Endothelial cell of umbilical vein (primary cell): ENCODE measurements at regions of chr5 and their contacts with region 1.

Region 1: GRCh38 chr5:34486160-34486848 is 169.8 kb upstream of the RAI14 start:
- DNase-seq: peak; percentile 87
- H3K4me3 ChIP-seq: no peak overlapping the region
- H3K27ac ChIP-seq: peak overlapping the region; percentile 78
- H3K4me1 ChIP-seq: peaks cover 19% of the 10 kb centered on the region
- H3K27me3 ChIP-seq: peaks cover 0 to 7% of the 10 kb centered on the region in 2 experiments
- CTCF ChIP-seq: peak; percentile 68 to 78
- POLR2A ChIP-seq: no peak

Region 2: DNA sequence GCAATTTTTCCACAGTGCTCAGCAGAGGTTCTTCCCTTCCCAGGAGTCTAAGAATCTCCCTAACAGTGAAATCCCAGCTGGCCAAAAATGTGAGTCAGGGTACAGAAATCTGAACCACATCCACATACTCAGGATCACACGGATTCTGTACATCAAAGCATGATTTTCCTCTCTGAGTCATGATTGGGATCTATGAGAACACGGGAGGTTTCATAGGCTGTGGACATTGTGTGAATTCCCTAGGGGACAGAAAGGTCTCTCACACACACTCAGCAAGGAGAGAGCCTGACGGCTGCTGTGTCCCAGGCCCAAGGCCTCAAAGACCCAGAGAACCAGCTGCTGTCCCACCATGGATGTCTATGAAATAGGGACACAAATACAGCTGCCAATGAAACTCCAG is 697.4 kb before region 1 on chr5:
- CTCF ChIA-PET with region 1: no interaction called
- POLR2A ChIA-PET with region 1: no interaction called
- dilution Hi-C with region 1: no loop called
- intact Hi-C with region 1: no loop called
- DNase-seq: no peak
- H3K4me3 ChIP-seq: no peak overlapping the region
- H3K27ac ChIP-seq: no peak overlapping the region
- H3K4me1 ChIP-seq: no peaks in the 10 kb centered on the region
- H3K27me3 ChIP-seq: no peaks in the 10 kb centered on the region
- CTCF ChIP-seq: no peak
- POLR2A ChIP-seq: no peak

Region 3: GRCh38 chr5:34522599-34523386 is 36.5 kb after region 1 on chr5:
- CTCF ChIA-PET with region 1: interaction called, 13 read pairs
- POLR2A ChIA-PET with region 1: no interaction called
- dilution Hi-C with region 1: no loop called
- intact Hi-C with region 1: loop called (anchors 1 kb)
- DNase-seq: no peak
- H3K4me3 ChIP-seq: no peak overlapping the region
- H3K27ac ChIP-seq: peak overlapping the region; percentile 84
- H3K4me1 ChIP-seq: peaks cover 42% of the 10 kb centered on the region
- H3K27me3 ChIP-seq: no peaks in the 10 kb centered on the region
- CTCF ChIP-seq: peak; percentile 65
- POLR2A ChIP-seq: no peak

Region 4: GRCh38 chr5:34656001-34656699 is 169.8 kb after region 1 on chr5 and contains the start of gene RAI14:
- CTCF ChIA-PET with region 1: interaction called, 18 read pairs
- POLR2A ChIA-PET with region 1: interaction called, 3 read pairs
- dilution Hi-C with region 1: no loop called
- intact Hi-C with region 1: loop called (anchors 1 kb)
- DNase-seq: peak; percentile 93
- H3K4me3 ChIP-seq: peak within 1 kb of the TSS; percentile 96 to 99 (median 98)
- H3K27ac ChIP-seq: peak within 1 kb of the TSS; percentile 96
- H3K4me1 ChIP-seq: peaks cover 53% of the 10 kb centered on the region
- H3K27me3 ChIP-seq: no peaks in the 10 kb centered on the region
- CTCF ChIP-seq: peak; percentile 8 to 24
- POLR2A ChIP-seq: peak; percentile 87
- total RNA-seq, gene RAI14: 369 and 390 TPM in 2 replicates

Region 5: DNA sequence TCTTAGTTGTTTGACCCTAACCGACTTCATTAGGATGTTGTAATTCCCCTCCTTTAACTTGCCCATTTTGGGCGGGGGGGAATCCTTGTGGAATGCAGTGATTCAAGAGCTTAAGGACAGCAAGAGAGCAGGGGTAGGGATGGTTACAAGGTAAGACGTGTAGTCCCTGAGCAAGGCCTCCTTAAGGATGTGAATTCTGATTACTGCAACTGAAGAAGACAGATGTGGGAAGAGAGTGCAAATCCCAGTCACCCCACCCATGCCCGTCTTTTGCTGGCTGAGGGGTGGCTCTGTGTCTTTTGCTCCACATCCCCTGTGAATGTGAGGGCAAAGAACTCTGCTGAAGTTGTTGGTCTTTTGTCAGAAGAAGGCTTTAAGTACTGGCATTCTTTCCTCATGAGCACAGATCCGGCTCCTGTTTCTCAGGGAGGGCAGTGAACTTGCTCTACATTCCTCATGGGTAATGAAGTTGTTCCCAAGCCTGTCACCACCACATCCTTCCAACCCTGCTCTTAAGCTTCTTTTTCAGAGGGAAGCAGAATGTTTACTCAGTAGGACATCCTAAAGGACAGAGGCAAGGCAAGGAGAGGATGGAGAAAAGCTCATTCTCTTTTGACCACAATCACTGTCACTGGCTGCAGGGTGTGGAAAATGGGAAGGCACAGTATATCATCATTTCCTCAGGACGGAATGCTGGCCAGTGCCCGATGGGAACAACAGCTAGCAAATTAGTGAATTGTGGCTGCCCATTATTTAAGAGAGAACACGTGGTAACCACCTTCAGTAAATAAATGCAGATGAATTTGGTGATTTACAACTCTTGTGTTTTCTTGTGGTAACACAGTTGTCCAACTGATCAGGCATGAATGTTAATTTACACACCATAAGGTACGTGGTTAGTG is 231.4 kb after region 1 on chr5:
- CTCF ChIA-PET with region 1: interaction called, 6 read pairs
- POLR2A ChIA-PET with region 1: no interaction called
- dilution Hi-C with region 1: no loop called
- intact Hi-C with region 1: loop called (anchors 1 kb)
- DNase-seq: peak; percentile 96
- H3K4me3 ChIP-seq: peak overlapping the region in 1 of 3 experiments; percentile 25
- H3K27ac ChIP-seq: peak overlapping the region; percentile 96
- H3K4me1 ChIP-seq: peaks cover 70% of the 10 kb centered on the region
- H3K27me3 ChIP-seq: no peaks in the 10 kb centered on the region
- CTCF ChIP-seq: no peak
- POLR2A ChIP-seq: peak; percentile 18

Region 6: DNA sequence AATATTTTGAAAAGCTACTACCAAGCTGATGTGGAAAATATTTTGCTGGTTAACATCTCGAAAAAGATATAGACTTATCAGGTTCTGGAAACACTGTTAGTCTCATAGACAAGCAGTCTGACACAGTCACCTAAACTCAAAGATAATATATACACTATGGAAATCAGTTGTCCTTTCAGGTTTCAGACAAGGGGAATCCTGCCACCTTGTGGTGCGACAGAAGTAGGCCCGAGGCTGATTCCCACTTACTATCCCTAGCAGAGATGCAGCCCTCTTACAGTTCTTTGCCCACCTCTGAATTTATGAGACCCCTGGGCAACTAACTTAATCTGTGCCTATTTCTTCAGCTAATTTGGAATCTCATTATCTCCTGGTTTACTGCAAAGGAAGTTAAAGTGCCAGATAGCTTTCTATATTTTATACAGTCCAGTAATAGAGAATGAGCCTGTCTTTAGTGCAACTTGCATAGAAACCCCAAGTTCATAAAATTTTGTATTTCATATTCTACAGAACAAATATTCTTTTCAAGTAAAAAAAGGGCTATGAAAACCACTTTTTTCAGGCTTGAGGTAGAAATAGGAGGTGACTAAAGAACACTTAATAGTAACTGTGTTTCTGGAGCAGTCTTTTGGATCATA is 412.1 kb after region 1 on chr5:
- CTCF ChIA-PET with region 1: interaction called, 84 read pairs
- POLR2A ChIA-PET with region 1: no interaction called
- dilution Hi-C with region 1: loop called (anchors 25 kb)
- intact Hi-C with region 1: loop called (anchors 1 kb)
- DNase-seq: peak; percentile 74
- H3K4me3 ChIP-seq: no peak overlapping the region
- H3K27ac ChIP-seq: no peak overlapping the region
- H3K4me1 ChIP-seq: no peaks in the 10 kb centered on the region
- H3K27me3 ChIP-seq: no peaks in the 10 kb centered on the region
- CTCF ChIP-seq: peak; percentile 83 to 84
- POLR2A ChIP-seq: no peak